B cell (primary cell): ENCODE measurements at regions of chr12 and their contacts with region 1.

Region 1: DNA sequence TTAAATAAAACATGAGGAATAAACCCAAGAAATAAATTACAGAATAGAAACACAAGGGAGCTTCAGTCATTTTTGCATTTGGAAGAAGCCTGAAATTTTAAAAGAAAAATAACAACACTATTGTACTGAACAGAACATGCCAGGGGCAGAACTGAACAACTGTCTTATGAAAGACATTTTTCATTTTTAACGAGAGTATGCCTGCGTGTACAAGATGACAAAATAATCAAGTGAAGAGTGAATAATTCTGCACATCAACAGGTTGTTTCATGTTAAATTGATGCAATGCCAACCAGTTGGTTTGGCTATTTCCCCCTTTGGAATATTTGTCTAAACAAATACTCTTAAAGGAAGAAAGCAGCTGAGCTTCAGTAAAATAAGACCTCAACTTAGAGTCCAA is 103.3 kb upstream of the BTG1 start:
- DNase-seq: no peak
- ATAC-seq: no peak
- H3K4me3 ChIP-seq: no peak overlapping the region
- H3K4me3 Mint-ChIP-seq: no peak overlapping the region
- H3K27ac ChIP-seq: no peak overlapping the region
- H3K27ac Mint-ChIP-seq: no peak overlapping the region
- H3K4me1 ChIP-seq: no peaks in the 10 kb centered on the region
- H3K4me1 Mint-ChIP-seq: peaks cover 19% of the 10 kb centered on the region
- H3K27me3 ChIP-seq: no peaks in the 10 kb centered on the region
- H3K27me3 Mint-ChIP-seq: no peaks in the 10 kb centered on the region
- CTCF ChIP-seq: no peak

Region 2: DNA sequence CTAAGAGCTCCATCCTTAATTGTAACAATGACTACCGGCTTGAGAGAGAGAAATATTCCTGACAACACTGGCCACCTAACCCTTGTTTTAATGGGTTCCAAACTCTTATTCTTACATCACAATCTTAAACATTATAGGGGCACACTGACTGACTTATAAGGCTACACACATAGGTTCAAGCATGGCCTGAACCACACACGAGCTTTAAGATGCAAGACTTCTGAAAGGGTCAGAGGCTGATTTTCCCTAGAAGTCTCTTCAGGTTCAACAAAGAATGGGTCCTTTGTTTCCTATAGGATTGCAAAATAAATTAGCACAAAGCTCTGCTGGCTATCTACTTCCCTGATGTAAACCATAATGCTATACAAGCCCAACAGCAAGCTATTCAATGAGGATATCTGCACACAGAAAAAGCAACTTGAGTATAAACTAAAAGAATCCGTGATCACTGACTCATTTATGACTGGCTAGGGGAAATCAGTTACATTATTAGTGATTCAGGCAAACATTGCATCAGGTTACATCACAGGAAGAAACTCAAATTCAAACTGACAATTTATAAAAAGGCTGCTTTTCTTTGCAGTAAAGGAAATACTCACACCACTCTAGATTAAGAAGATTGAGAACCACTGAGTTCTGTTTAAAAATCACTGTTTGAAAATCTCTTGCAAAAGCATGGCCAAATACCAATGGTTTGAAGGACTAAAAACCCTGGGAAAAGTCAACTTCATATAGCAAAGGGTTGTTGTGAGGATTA is 111.8 kb before region 1 on chr12:
- CTCF ChIA-PET with region 1: no interaction called
- POLR2A ChIA-PET with region 1: no interaction called
- intact Hi-C with region 1: no loop called
- DNase-seq: no peak
- ATAC-seq: no peak
- H3K4me3 ChIP-seq: peak overlapping the region; percentile 28 to 100 (median 96)
- H3K4me3 Mint-ChIP-seq: peak overlapping the region; percentile 98
- H3K27ac ChIP-seq: peak overlapping the region in 1 of 2 donors; percentile 13
- H3K27ac Mint-ChIP-seq: peak overlapping the region; percentile 23
- H3K4me1 ChIP-seq: peaks cover 71 to 80% of the 10 kb centered on the region in 2 donors
- H3K4me1 Mint-ChIP-seq: peaks cover 74% of the 10 kb centered on the region
- H3K27me3 ChIP-seq: no peaks in the 10 kb centered on the region
- H3K27me3 Mint-ChIP-seq: no peaks in the 10 kb centered on the region
- CTCF ChIP-seq: no peak

Region 3: GRCh38 chr12:92208613-92209121 is 40.3 kb before region 1 on chr12:
- CTCF ChIA-PET with region 1: no interaction called
- POLR2A ChIA-PET with region 1: no interaction called
- intact Hi-C with region 1: loop called (anchors 5 kb)
- DNase-seq: peak; percentile 45
- ATAC-seq: peak; percentile 88
- H3K4me3 ChIP-seq: peak overlapping the region; percentile 7 to 64 (median 13)
- H3K4me3 Mint-ChIP-seq: peak overlapping the region; percentile 81
- H3K27ac ChIP-seq: peak overlapping the region; percentile 9 to 52
- H3K27ac Mint-ChIP-seq: peak overlapping the region; percentile 83
- H3K4me1 ChIP-seq: peaks cover 20 to 26% of the 10 kb centered on the region in 2 donors
- H3K4me1 Mint-ChIP-seq: peaks cover 31% of the 10 kb centered on the region
- H3K27me3 ChIP-seq: no peaks in the 10 kb centered on the region
- H3K27me3 Mint-ChIP-seq: no peaks in the 10 kb centered on the region
- CTCF ChIP-seq: no peak